Activated T-helper 2 cell treated with anti-CD3 and anti-CD28 coated beads, Interferon-gamma antibody, Interleukin-2, Interleukin-4, amounts not matched to agents 10 μg/mL and 5 μg/mL and 100 μg/mL, durations not matched to agents 14 hours and 24 hours and 36 hours (primary cell): ENCODE measurements at regions of chrX and their contacts with region 1.

Region 1: DNA sequence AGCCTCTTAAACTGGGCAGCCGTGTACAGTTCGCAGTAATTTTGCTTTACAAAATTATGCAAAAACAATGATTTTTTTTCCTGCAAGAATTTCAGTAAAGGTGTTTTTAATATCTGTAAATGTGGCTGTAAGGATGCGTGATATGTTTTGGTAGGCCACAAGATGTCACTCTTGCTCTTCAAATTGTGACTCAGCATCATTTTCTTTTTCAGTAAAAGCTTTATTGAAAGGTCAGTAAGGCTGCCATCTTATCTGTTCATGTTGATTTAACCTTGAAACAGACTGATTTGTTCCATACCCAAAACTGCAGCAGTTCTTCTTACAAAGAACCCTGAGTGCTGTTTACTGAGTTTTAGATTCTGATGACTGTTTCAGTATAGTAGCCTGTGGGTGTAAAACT is 39.9 kb downstream of the TXLNG start:
- DNase-seq: no peak
- H3K4me3 Mint-ChIP-seq: no peak overlapping the region
- H3K27ac Mint-ChIP-seq: peak overlapping the region; percentile 62
- H3K4me1 Mint-ChIP-seq: peaks cover 15% of the 10 kb centered on the region
- H3K27me3 Mint-ChIP-seq: no peaks in the 10 kb centered on the region

Region 2: DNA sequence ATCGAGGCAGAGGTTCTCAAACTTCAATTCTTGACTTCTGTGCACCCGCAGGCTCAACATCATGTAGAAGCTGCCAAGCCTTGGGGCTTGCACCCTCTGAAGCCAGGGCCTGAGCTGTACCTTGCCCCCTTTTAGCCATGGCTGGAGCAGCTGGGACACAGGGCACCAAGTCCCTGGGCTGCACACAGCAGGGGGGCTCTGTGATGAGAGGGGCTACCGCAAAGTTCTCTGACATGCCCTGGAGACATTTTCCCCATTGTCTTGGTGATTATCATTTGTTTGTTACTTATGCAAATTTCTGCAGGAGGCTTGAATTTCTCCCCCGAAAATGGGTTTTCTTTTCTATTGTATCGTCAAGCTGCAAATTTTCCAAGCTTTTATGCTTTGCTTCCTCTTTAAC is 663.8 kb before region 1 on chrX:
- intact Hi-C with region 1: no loop called
- DNase-seq: no peak
- H3K4me3 Mint-ChIP-seq: no peak overlapping the region
- H3K27ac Mint-ChIP-seq: no peak overlapping the region
- H3K4me1 Mint-ChIP-seq: no peaks in the 10 kb centered on the region
- H3K27me3 Mint-ChIP-seq: peaks cover 3% of the 10 kb centered on the region

Region 3: DNA sequence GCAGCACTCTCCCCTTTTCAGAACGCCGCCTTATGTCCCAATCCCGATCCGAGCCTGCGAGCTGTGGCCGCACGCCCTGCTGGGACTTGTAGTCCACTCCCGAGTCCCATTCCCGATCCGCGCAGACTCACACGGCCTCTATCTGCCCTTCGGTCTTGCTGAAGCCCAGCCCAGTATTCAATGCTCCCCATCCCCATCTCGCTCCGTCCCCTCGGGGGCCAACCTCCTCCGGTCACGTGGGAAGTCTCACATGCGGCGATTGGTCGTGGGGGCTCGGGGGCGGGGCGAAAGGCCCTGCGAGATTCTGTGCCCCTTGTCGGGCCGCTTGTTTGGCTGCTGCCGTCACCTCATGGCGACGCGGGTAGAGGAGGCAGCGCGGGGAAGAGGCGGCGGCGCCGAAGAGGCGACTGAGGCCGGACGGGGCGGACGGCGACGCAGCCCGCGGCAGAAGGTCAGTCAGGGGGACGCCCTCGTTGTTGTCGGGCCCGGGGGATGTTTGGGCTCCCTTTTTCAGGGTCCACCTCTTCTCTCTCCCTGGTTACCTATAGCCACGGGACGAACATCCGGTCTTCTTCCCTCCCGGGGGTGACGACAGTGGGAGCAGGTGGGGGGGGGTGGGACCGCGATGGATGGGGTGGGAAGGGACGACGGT is 39.9 kb before region 1 on chrX and contains the start of gene TXLNG:
- intact Hi-C with region 1: loop called (anchors 1 kb)
- DNase-seq: peak; percentile 92
- H3K4me3 Mint-ChIP-seq: peak within 1 kb of the TSS; percentile 89
- H3K27ac Mint-ChIP-seq: peak within 1 kb of the TSS; percentile 73
- H3K4me1 Mint-ChIP-seq: peaks cover 9% of the 10 kb centered on the region
- H3K27me3 Mint-ChIP-seq: no peaks in the 10 kb centered on the region
- total RNA-seq, gene TXLNG: 19.9 and 21.4 TPM in 2 replicates

Region 4: GRCh38 chrX:16870095-16870860 is 44.1 kb after region 1 on chrX and contains the start of gene RBBP7:
- intact Hi-C with region 1: loop called (anchors 2 kb)
- DNase-seq: peak; percentile 87
- H3K4me3 Mint-ChIP-seq: peak within 1 kb of the TSS; percentile 96
- H3K27ac Mint-ChIP-seq: peak within 1 kb of the TSS; percentile 98
- H3K4me1 Mint-ChIP-seq: peaks cover 19% of the 10 kb centered on the region
- H3K27me3 Mint-ChIP-seq: peaks cover 5% of the 10 kb centered on the region
- total RNA-seq, gene RBBP7: 163 and 164 TPM in 2 replicates

Region 5: GRCh38 chrX:16892504-16893362 is 66.5 kb after region 1 on chrX:
- intact Hi-C with region 1: loop called (anchors 2 kb)
- DNase-seq: peak; percentile 28
- H3K4me3 Mint-ChIP-seq: no peak overlapping the region
- H3K27ac Mint-ChIP-seq: no peak overlapping the region
- H3K4me1 Mint-ChIP-seq: peaks cover 12% of the 10 kb centered on the region
- H3K27me3 Mint-ChIP-seq: peaks cover 8% of the 10 kb centered on the region

Region 6: DNA sequence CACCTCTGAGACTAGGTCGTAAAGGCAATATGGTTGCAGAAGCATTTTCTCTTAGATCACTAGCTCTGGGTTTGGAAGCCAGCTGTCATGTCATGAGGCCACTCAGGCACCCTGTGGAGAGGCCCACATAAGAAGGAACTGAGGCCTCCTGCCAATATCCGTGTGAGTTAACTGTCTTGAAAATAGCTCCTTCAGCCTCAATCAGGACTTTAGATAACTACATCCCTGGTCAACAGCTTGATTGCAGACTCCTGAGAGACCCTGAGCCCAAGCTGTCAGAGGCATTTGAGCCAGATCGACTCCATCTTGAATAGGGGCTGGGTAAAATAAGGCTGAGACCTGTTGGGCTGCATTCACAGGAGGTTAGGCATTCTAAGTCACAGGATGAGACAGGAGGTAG is 105.2 kb after region 1 on chrX:
- intact Hi-C with region 1: no loop called
- DNase-seq: no peak
- H3K4me3 Mint-ChIP-seq: no peak overlapping the region
- H3K27ac Mint-ChIP-seq: no peak overlapping the region
- H3K4me1 Mint-ChIP-seq: no peaks in the 10 kb centered on the region
- H3K27me3 Mint-ChIP-seq: peaks cover 2% of the 10 kb centered on the region

Region 7: GRCh38 chrX:16963216-16963615 is 137.0 kb after region 1 on chrX:
- intact Hi-C with region 1: no loop called
- DNase-seq: no peak
- H3K4me3 Mint-ChIP-seq: no peak overlapping the region
- H3K27ac Mint-ChIP-seq: no peak overlapping the region
- H3K4me1 Mint-ChIP-seq: no peaks in the 10 kb centered on the region
- H3K27me3 Mint-ChIP-seq: no peaks in the 10 kb centered on the region

Region 8: GRCh38 chrX:17046478-17047097 is 220.4 kb after region 1 on chrX:
- intact Hi-C with region 1: loop called (anchors 1 kb)
- DNase-seq: peak; percentile 8
- H3K4me3 Mint-ChIP-seq: no peak overlapping the region
- H3K27ac Mint-ChIP-seq: no peak overlapping the region
- H3K4me1 Mint-ChIP-seq: peaks cover 2% of the 10 kb centered on the region
- H3K27me3 Mint-ChIP-seq: peaks cover 2% of the 10 kb centered on the region